PC-3 (cell line): ENCODE measurements at regions of chr16 and their contacts with region 1.

Region 1: GRCh38 chr16:67198238-67198734 is 645 bp upstream of the ELMO3 start:
- DNase-seq: peak; percentile 30
- ATAC-seq: peak; percentile 77
- H3K4me3 ChIP-seq: no peak overlapping the region
- H3K27ac ChIP-seq: no peak overlapping the region
- H3K4me1 ChIP-seq: peaks cover 6% of the 10 kb centered on the region
- H3K27me3 ChIP-seq: no peaks in the 10 kb centered on the region
- CTCF ChIP-seq: peak; percentile 70

Region 2: GRCh38 chr16:67268136-67268579 is 69.9 kb after region 1 on chr16:
- CTCF ChIA-PET with region 1: no interaction called
- POLR2A ChIA-PET with region 1: interaction called, 15 read pairs
- intact Hi-C with region 1: no loop called
- DNase-seq: peak; percentile 54
- ATAC-seq: peak; percentile 80
- H3K4me3 ChIP-seq: no peak overlapping the region
- H3K27ac ChIP-seq: no peak overlapping the region
- H3K4me1 ChIP-seq: peaks cover 6% of the 10 kb centered on the region; the same call in 1 of the 2 replicates
- H3K27me3 ChIP-seq: no peaks in the 10 kb centered on the region
- CTCF ChIP-seq: no peak